ENCODE measurements at regions of chr5 and their contacts with region 1.

Region 1: GRCh38 chr5:31809050-31809870 is 170.3 kb downstream of the PDZD2 start:
- DNase-seq: peak; percentile 47 to 54
- ATAC-seq: peak; percentile 77 to 81
- H3K4me3 ChIP-seq: no peak overlapping the region
- H3K27ac ChIP-seq: no peak overlapping the region
- H3K4me1 ChIP-seq: peaks cover 0 to 8% of the 10 kb centered on the region in 2 donors
- H3K27me3 ChIP-seq: no peaks in the 10 kb centered on the region
- CTCF ChIP-seq: peak; percentile 38 to 72 (median 49)
- POLR2A ChIP-seq: no peak

Region 2: DNA sequence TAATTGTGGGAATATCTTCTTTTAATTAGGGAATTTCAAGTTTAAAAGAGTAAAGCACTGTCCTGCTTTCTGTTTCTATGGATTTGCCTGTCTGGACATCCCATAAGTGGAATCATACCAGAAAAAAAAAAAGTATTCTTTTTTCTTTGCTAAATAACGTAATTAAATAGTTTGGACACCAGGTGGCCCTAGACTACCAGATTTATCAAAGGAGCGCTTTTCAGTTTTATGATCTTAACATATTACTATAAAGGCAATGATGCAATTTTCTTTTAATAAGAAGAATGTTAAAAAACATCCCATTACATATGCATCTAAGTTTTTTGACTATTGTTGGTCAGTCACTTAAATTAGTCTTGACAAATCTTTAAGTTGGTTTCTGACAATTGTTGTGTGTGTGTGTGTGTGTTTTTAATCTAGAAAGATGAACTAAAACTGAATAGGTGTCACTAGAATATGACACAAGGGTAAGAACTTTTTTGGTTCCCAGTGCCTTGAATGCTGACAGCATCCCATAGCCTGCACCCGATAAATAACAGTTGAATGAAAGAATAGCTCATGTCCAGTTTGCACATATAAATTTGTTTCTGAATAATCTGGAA is 227.7 kb before region 1 on chr5:
- in situ Hi-C with region 1: loop called (anchors 5 to 25 kb)
- intact Hi-C with region 1: loop called (anchors 1 kb)
- DNase-seq: no peak
- ATAC-seq: no peak
- H3K4me3 ChIP-seq: no peak overlapping the region
- H3K27ac ChIP-seq: no peak overlapping the region
- H3K4me1 ChIP-seq: no peaks in the 10 kb centered on the region
- H3K27me3 ChIP-seq: peaks cover 0 to 4% (median 0%) of the 10 kb centered on the region in 3 donors
- CTCF ChIP-seq: peak; percentile 22 to 57 (median 35)
- POLR2A ChIP-seq: no peak

Region 3: DNA sequence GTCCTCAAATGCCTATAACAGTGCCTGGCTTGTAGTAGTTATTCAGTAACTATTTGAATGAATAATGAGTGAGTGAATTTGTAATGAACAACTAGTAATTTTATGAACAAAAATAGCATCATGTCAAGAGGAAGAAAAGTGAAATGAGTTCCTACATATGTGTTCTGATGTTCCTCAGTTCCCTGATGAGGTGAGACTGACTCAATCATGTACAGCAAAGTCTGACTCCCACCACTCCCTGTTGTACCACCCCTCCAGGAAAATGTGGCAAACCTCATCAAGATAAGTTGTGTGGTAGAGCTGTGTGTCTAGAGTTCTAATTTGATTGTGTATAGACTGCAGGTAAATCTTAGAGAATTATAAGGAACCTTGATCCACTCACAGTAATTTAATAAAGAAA is 163.3 kb after region 1 on chr5:
- in situ Hi-C with region 1: no loop called
- intact Hi-C with region 1: no loop called
- DNase-seq: no peak
- ATAC-seq: no peak
- H3K4me3 ChIP-seq: no peak overlapping the region
- H3K27ac ChIP-seq: no peak overlapping the region
- H3K4me1 ChIP-seq: no peaks in the 10 kb centered on the region
- H3K27me3 ChIP-seq: no peaks in the 10 kb centered on the region
- CTCF ChIP-seq: no peak
- POLR2A ChIP-seq: no peak

Measured in gastrocnemius medialis (tissue), 4 donors.